ENCODE measurements at regions of chr11 and their contacts with region 1.

Region 1: GRCh38 chr11:44286268-44286880 is 23.6 kb downstream of the ALX4 start:
- DNase-seq: peak in 4 of 10 donors; percentile 13 to 54 (median 25)
- H3K4me3 ChIP-seq: no peak overlapping the region
- H3K27ac ChIP-seq: no peak overlapping the region
- H3K27me3 ChIP-seq: peaks cover 0 to 9% (median 0%) of the 10 kb centered on the region in 45 donors
- CTCF ChIP-seq: peak; percentile 53 to 95 (median 89)

Region 2: GRCh38 chr11:43933608-43934551 is 352.5 kb before region 1 on chr11:
- intact Hi-C with region 1: no loop called
- DNase-seq: no peak
- H3K4me3 ChIP-seq: peak overlapping the region in 21 of 59 donors; percentile 2 to 45 (median 19)
- H3K27ac ChIP-seq: peak overlapping the region in 1 of 59 donors; percentile 21
- H3K27me3 ChIP-seq: no peaks in the 10 kb centered on the region
- CTCF ChIP-seq: peak in 19 of 56 donors; percentile 5 to 26 (median 15)

Region 3: DNA sequence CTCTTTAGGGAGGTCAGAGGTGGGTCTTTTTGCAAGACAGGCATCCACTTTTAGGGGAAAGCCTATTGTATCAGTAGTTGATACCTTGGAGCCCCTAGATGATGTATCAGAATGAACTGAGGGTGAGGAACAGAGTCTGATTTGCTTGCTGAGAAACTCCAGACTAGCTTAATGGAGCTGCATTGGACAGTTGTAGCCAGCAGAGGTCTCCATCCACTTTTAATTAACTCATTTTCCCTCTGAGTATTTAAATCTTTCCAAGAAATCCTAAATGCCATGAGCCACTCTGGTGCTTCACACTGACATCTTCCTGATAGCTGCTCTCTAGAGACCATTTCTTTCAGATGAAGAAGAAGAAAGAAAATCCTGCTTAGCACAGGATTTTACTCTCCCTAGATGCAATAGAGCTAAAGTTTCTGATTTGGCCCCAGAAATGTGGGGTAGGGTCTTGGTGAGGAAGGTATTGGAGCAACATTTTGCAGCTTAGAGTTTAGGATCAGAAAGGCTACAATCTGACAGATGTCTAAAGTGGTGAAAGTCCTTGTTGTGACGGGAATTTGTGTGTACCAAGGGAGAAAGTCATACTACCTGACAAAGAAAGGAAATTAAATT is 152.9 kb before region 1 on chr11:
- intact Hi-C with region 1: loop called in 1 of 2 experiments (anchors 10 kb)
- DNase-seq: peak in 1 of 10 donors; percentile 16
- H3K4me3 ChIP-seq: no peak overlapping the region
- H3K27ac ChIP-seq: no peak overlapping the region
- H3K27me3 ChIP-seq: no peaks in the 10 kb centered on the region
- CTCF ChIP-seq: peak in 52 of 56 donors; percentile 28 to 74 (median 56)

Region 4: GRCh38 chr11:44344921-44345320 is 58.5 kb after region 1 on chr11:
- intact Hi-C with region 1: no loop called
- DNase-seq: no peak
- H3K4me3 ChIP-seq: no peak overlapping the region
- H3K27ac ChIP-seq: no peak overlapping the region
- H3K27me3 ChIP-seq: peaks cover 0 to 25% (median 0%) of the 10 kb centered on the region in 45 donors
- CTCF ChIP-seq: no peak

Region 5: GRCh38 chr11:44498089-44498871 is 211.9 kb after region 1 on chr11:
- intact Hi-C with region 1: no loop called
- DNase-seq: no peak
- H3K4me3 ChIP-seq: no peak overlapping the region
- H3K27ac ChIP-seq: no peak overlapping the region
- H3K27me3 ChIP-seq: peaks cover 0 to 3% (median 0%) of the 10 kb centered on the region in 45 donors
- CTCF ChIP-seq: no peak

Region 6: GRCh38 chr11:44538375-44539054 is 252.1 kb after region 1 on chr11:
- intact Hi-C with region 1: loop called in 1 of 2 experiments (anchors 2 kb)
- DNase-seq: peak; percentile 65 to 88 (median 78)
- H3K4me3 ChIP-seq: peak overlapping the region in 3 of 59 donors; percentile 17 to 19 (median 19)
- H3K27ac ChIP-seq: no peak overlapping the region
- H3K27me3 ChIP-seq: peaks cover 0 to 2% (median 0%) of the 10 kb centered on the region in 45 donors
- CTCF ChIP-seq: peak; percentile 80 to 100 (median 96)